ENCODE measurements at regions of chr3 and their contacts with region 1.

Region 1: GRCh38 chr3:57227204-57227929 is at the start of gene APPL1:
- DNase-seq: peak; percentile 79 to 89 (median 84)
- H3K4me3 ChIP-seq: peak within 1 kb of the TSS; percentile 40 to 85
- H3K4me3 Mint-ChIP-seq: peak within 1 kb of the TSS; percentile 89 to 98 (median 94)
- H3K27ac ChIP-seq: peak within 1 kb of the TSS; percentile 45
- H3K27ac Mint-ChIP-seq: peak within 1 kb of the TSS; percentile 70 to 93 (median 86)
- H3K4me1 ChIP-seq: peaks cover 26% of the 10 kb centered on the region
- H3K4me1 Mint-ChIP-seq: peaks cover 12 to 35% (median 25%) of the 10 kb centered on the region in 4 donors
- H3K27me3 ChIP-seq: no peaks in the 10 kb centered on the region
- H3K27me3 Mint-ChIP-seq: no peaks in the 10 kb centered on the region
- total RNA-seq, gene APPL1: 30.9 to 33.6 TPM

Region 2: DNA sequence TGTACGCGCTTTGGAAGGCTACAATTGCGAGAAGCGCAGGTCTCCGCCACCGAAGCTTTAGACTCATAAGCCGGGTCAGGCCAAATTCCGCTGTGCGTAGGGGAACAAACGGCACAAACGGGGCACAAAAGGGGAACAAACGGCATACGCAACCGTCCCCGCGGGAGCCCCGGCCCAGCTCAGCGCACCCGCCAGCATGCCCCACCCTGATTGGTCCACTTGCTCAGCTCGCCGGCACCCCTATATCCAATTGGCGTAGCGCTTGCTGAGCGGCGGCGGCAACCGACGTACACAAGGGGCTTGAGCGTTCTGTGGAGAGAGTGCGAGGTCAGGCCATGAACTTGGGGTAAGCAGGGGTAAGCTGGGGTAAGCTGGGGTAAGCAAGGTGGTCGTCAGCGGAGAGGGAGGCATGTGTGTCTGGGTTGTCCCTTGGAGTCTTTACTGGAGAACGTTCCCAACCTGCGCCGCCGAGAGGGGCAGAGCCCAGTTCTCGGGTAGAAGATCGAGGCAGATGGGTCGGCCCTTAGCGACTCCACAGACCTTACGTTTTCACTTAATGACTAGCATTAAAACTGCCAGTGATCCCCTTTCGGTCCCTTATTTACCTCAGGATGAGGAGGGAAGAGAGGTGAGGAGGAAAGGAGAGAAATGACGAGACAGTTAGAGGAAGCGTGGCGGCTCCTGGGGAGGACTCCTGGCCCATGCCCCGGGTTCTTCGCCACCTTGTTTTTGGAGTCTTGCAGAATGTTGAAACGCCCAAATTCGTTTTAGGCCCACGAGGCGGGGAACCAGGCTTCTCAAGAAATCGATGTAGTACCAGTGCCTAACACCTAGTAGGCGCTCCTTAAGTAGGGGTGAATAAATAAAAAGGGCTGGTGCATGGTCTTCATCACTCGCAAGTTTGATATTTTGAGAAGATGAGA is 670.2 kb before region 1 on chr3 and contains the start of gene CCDC66:
- CTCF ChIA-PET with region 1: no interaction called
- POLR2A ChIA-PET with region 1: interaction called, 3 read pairs
- intact Hi-C with region 1: loop called (anchors 5 kb)
- DNase-seq: peak; percentile 92 to 95 (median 93)
- H3K4me3 ChIP-seq: peak within 1 kb of the TSS; percentile 90 to 91
- H3K4me3 Mint-ChIP-seq: peak within 1 kb of the TSS; percentile 95 to 100 (median 99)
- H3K27ac ChIP-seq: peak within 1 kb of the TSS; percentile 91
- H3K27ac Mint-ChIP-seq: peak within 1 kb of the TSS; percentile 98 to 100 (median 99)
- H3K4me1 ChIP-seq: peaks cover 24% of the 10 kb centered on the region
- H3K4me1 Mint-ChIP-seq: peaks cover 15 to 42% (median 29%) of the 10 kb centered on the region in 4 donors
- H3K27me3 ChIP-seq: no peaks in the 10 kb centered on the region
- H3K27me3 Mint-ChIP-seq: no peaks in the 10 kb centered on the region
- total RNA-seq, gene CCDC66: 93.4 to 104 TPM

Region 3: DNA sequence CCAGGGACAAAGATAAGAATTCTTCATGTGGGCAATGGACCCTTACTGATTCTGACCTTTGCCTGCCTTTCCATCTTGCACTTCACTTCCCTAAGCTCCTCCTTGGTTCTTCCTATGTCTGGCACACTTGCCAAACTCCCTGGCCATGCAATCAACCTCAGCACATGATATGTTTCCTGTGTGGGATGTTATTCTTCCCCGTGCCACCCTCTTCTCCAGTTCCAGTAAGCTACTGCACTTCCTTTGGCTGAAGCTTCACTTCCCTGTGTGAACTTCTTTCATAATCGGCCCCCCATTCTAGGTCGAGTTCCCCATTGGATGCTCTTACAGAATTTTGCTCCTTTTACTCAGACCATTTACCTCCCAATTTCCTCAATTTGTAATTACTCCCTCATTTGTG is 533.6 kb before region 1 on chr3:
- CTCF ChIA-PET with region 1: no interaction called
- POLR2A ChIA-PET with region 1: interaction called, 10 read pairs
- intact Hi-C with region 1: loop called (anchors 10 kb)
- DNase-seq: no peak
- H3K4me3 ChIP-seq: no peak overlapping the region
- H3K4me3 Mint-ChIP-seq: peak overlapping the region in 7 of 8 donors; percentile 37 to 86 (median 80)
- H3K27ac ChIP-seq: no peak overlapping the region
- H3K27ac Mint-ChIP-seq: peak overlapping the region in 6 of 7 donors; percentile 3 to 86 (median 70)
- H3K4me1 ChIP-seq: peaks cover 38% of the 10 kb centered on the region
- H3K4me1 Mint-ChIP-seq: peaks cover 36 to 46% (median 41%) of the 10 kb centered on the region in 4 donors
- H3K27me3 ChIP-seq: no peaks in the 10 kb centered on the region
- H3K27me3 Mint-ChIP-seq: no peaks in the 10 kb centered on the region

Region 4: GRCh38 chr3:57252404-57252803 is 25.0 kb after region 1 on chr3:
- CTCF ChIA-PET with region 1: no interaction called
- POLR2A ChIA-PET with region 1: no interaction called
- intact Hi-C with region 1: no loop called
- DNase-seq: no peak
- H3K4me3 ChIP-seq: no peak overlapping the region
- H3K4me3 Mint-ChIP-seq: no peak overlapping the region
- H3K27ac ChIP-seq: no peak overlapping the region
- H3K27ac Mint-ChIP-seq: peak overlapping the region in 1 of 7 donors; percentile 18
- H3K4me1 ChIP-seq: no peaks in the 10 kb centered on the region
- H3K4me1 Mint-ChIP-seq: no peaks in the 10 kb centered on the region
- H3K27me3 ChIP-seq: no peaks in the 10 kb centered on the region
- H3K27me3 Mint-ChIP-seq: no peaks in the 10 kb centered on the region

Region 5: DNA sequence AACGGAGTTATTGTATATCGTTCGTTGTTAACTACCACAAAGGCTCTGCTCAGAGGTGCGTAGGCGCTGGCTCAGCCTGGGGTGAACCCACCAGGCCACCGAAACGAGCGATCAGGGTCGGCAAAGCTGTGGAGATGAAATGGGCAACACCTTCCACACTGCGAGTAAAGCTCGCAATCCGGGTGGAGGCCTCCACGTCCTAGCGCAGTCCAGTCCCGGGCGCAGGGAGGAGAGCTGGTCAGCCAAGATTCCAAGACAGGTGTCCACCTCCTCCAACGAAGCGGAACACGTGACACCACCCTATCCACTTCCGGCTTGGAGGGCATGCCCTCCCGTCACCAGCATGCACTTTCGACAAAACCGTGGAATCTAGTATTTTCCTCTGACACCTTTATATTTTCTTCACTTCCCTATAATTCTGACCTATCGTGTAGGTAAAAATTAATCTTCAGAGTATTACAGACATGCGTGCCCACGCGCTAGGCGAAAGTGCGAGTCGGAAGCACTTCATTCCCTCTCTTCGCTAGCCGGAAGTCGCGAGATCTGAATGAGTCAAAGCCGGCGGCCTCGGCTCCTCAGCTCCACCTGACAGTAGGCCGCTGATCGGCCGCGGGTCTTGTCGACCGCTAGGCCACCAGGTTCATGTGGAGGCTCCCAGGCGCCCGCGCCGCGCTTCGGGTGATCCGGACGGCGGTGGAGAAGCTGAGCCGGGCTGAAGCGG is 328.5 kb after region 1 on chr3 and contains the start of gene PDE12:
- CTCF ChIA-PET with region 1: no interaction called
- POLR2A ChIA-PET with region 1: interaction called, 10 read pairs
- intact Hi-C with region 1: no loop called
- DNase-seq: peak; percentile 82 to 87 (median 83)
- H3K4me3 ChIP-seq: peak within 1 kb of the TSS; percentile 85 to 89
- H3K4me3 Mint-ChIP-seq: peak within 1 kb of the TSS; percentile 92 to 100 (median 96)
- H3K27ac ChIP-seq: peak within 1 kb of the TSS; percentile 89
- H3K27ac Mint-ChIP-seq: peak within 1 kb of the TSS; percentile 97 to 100 (median 99)
- H3K4me1 ChIP-seq: peaks cover 43% of the 10 kb centered on the region
- H3K4me1 Mint-ChIP-seq: peaks cover 24 to 57% (median 36%) of the 10 kb centered on the region in 4 donors
- H3K27me3 ChIP-seq: no peaks in the 10 kb centered on the region
- H3K27me3 Mint-ChIP-seq: no peaks in the 10 kb centered on the region
- total RNA-seq, gene PDE12: 23.8 to 24.9 TPM

Region 6: GRCh38 chr3:57692259-57693147 is 465.1 kb after region 1 on chr3 and contains the start of gene DENND6A:
- CTCF ChIA-PET with region 1: no interaction called
- POLR2A ChIA-PET with region 1: no interaction called
- intact Hi-C with region 1: loop called (anchors 5 kb)
- DNase-seq: peak; percentile 87 to 96 (median 95)
- H3K4me3 ChIP-seq: peak within 1 kb of the TSS; percentile 15 to 95
- H3K4me3 Mint-ChIP-seq: peak within 1 kb of the TSS; percentile 82 to 97 (median 92)
- H3K27ac ChIP-seq: peak within 1 kb of the TSS; percentile 84
- H3K27ac Mint-ChIP-seq: peak within 1 kb of the TSS; percentile 79 to 97 (median 94)
- H3K4me1 ChIP-seq: peaks cover 49% of the 10 kb centered on the region
- H3K4me1 Mint-ChIP-seq: peaks cover 16 to 45% (median 32%) of the 10 kb centered on the region in 4 donors
- H3K27me3 ChIP-seq: no peaks in the 10 kb centered on the region
- H3K27me3 Mint-ChIP-seq: no peaks in the 10 kb centered on the region
- total RNA-seq, gene DENND6A: 40.1 to 43.7 TPM

Region 7: GRCh38 chr3:58237238-58237940 is 1010.0 kb after region 1 on chr3 and contains the start of gene ABHD6:
- CTCF ChIA-PET with region 1: no interaction called
- POLR2A ChIA-PET with region 1: no interaction called
- intact Hi-C with region 1: loop called (anchors 10 kb)
- DNase-seq: peak; percentile 72 to 93 (median 88)
- H3K4me3 ChIP-seq: peak within 1 kb of the TSS; percentile 58
- H3K4me3 Mint-ChIP-seq: peak within 1 kb of the TSS; percentile 88 to 96 (median 92)
- H3K27ac ChIP-seq: peak within 1 kb of the TSS; percentile 62
- H3K27ac Mint-ChIP-seq: peak within 1 kb of the TSS; percentile 85 to 92 (median 91)
- H3K4me1 ChIP-seq: peaks cover 12% of the 10 kb centered on the region
- H3K4me1 Mint-ChIP-seq: peaks cover 7 to 21% (median 12%) of the 10 kb centered on the region in 4 donors
- H3K27me3 ChIP-seq: no peaks in the 10 kb centered on the region
- H3K27me3 Mint-ChIP-seq: peaks cover 3 to 4% of the 10 kb centered on the region in 2 donors
- total RNA-seq, gene ABHD6: 5.1 to 7.2 TPM